ENCODE measurements at regions of chr7 and their contacts with region 1.

Region 1: DNA sequence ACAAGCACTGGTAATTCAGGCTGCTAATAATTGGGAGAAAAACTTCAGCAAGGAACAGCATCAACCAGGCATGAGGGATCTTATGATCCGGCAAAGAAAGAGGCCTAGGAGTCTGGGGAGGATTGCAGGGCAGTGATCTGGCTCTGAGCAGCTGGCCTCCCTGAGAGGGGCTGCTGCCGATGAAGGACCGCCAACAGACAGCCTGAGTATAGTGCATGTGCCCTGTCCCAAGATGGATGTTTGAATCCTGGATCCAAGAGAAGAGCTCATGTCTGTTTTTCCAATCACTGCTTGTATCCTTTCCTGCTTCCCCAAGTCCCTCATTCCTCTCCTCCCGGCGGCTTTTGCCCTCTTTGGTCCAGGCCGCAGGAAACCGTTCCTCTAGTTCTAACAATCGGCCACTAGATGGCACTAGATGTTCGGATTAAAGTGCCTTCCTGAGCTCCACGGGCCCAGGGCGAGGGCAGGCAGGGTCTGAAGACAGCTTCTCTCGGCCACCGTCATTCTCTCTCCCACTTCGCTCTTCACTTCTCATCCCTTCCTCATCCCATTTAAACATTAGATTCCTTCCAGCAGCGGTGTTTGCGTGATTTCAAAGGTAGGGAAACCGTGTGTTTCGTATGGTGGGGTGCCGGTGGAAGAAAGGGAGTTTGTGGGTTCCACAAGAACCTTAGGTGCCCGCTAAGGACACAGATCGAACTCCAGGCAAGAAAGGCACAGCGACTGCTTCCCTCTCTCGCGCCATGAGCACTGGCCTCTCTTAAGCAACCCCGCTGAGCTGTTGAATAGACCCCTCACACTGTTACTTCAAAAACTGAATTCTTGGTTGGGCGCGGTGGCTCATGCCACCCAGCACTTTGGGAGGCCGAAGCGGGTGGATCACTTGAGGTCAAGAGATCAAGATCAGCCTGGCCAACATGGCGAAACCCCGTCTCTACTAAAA is 82.4 kb downstream of the ADCYAP1R1 start:
- DNase-seq: peak in 1 of 2 donors; percentile 68
- ATAC-seq: peak in 2 of 3 donors; percentile 58 to 70
- H3K4me3 ChIP-seq: no peak overlapping the region
- H3K4me3 Mint-ChIP-seq: no peak overlapping the region
- H3K27ac ChIP-seq: no peak overlapping the region
- H3K27ac Mint-ChIP-seq: no peak overlapping the region
- H3K4me1 ChIP-seq: no peaks in the 10 kb centered on the region
- H3K4me1 Mint-ChIP-seq: peaks cover 4 to 5% of the 10 kb centered on the region in 2 donors
- H3K27me3 ChIP-seq: no peaks in the 10 kb centered on the region
- H3K27me3 Mint-ChIP-seq: peaks cover 3 to 8% of the 10 kb centered on the region in 2 donors
- CTCF ChIP-seq: peak; percentile 63

Region 2: DNA sequence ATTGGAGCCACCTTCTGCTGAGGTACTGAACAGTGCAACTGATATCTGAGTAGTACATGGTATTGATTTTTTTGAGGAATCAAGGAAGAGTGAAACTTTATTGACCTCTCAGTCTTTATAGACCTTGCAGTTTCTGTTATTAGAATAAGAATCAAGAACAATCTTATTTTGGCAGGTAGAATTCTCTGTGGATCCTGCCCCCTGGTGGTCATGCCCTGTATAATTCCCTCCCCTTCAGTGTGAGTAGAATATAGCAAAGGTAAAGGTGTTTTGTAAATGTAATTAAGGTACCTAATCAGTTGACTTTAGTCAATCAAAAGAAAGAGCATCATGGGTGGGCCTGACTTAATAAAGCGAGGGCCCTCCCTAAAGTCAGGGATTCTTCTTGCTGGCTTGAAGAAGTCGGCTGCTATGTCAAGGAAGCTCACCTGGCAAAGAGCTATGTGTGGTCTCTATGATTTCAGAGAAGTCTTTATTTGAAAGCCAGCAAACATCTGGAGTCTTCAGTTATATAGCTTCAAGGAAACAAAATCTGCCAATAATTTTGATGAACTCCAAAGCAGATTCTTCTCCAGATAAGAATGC is 1212.8 kb after region 1 on chr7:
- intact Hi-C with region 1: loop called (anchors 10 kb)
- DNase-seq: peak in 1 of 2 donors; percentile 24
- ATAC-seq: peak in 1 of 3 donors; percentile 39
- H3K4me3 ChIP-seq: no peak overlapping the region
- H3K4me3 Mint-ChIP-seq: no peak overlapping the region
- H3K27ac ChIP-seq: no peak overlapping the region
- H3K27ac Mint-ChIP-seq: no peak overlapping the region
- H3K4me1 ChIP-seq: no peaks in the 10 kb centered on the region
- H3K4me1 Mint-ChIP-seq: no peaks in the 10 kb centered on the region
- H3K27me3 ChIP-seq: no peaks in the 10 kb centered on the region
- H3K27me3 Mint-ChIP-seq: peaks cover 0 to 2% of the 10 kb centered on the region in 2 donors
- CTCF ChIP-seq: peak; percentile 82